ENCODE measurements at regions of chr4 and their contacts with region 1.

Region 1: DNA sequence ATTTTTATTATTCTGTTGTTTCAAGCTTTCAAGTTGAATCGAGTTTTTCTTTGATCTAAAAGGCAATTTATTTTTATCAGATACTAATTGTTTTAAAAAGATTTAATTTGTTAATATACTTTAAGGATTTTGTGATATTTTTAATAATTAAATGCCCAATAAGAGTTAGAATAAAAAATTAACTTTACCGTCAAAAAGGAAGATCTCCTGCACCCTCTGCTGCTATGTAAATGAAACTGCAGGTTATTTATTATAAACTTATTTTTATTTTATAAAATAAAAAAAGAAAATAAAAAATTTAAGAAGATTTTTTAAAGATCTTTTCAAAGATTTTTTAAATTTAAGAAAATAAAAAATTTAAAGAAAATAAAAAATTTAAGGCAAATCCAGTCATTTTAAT is 166.1 kb downstream of the CCSER1 start:
- DNase-seq: no peak
- H3K4me3 ChIP-seq: no peak overlapping the region
- H3K27ac ChIP-seq: no peak overlapping the region
- H3K4me1 ChIP-seq: peaks cover 0 to 4% of the 10 kb centered on the region in 2 experiments; a peak in 2 of 4 replicates
- H3K27me3 ChIP-seq: no peaks in the 10 kb centered on the region
- CTCF ChIP-seq: peak; percentile 54
- EP300 ChIP-seq: no peak
- RAD21 ChIP-seq: peak; percentile 75

Region 2: GRCh38 chr4:89914609-89915550 is 378.4 kb before region 1 on chr4:
- CTCF ChIA-PET with region 1: interaction called, 14 read pairs
- POLR2A ChIA-PET with region 1: no interaction called
- DNase-seq: no peak
- H3K4me3 ChIP-seq: no peak overlapping the region
- H3K27ac ChIP-seq: no peak overlapping the region
- H3K4me1 ChIP-seq: no peaks in the 10 kb centered on the region; a peak in 1 of 4 replicates
- H3K27me3 ChIP-seq: no peaks in the 10 kb centered on the region
- CTCF ChIP-seq: peak; percentile 20; the same call in 1 of the 2 replicates
- EP300 ChIP-seq: no peak
- RAD21 ChIP-seq: peak; percentile 69

Region 3: DNA sequence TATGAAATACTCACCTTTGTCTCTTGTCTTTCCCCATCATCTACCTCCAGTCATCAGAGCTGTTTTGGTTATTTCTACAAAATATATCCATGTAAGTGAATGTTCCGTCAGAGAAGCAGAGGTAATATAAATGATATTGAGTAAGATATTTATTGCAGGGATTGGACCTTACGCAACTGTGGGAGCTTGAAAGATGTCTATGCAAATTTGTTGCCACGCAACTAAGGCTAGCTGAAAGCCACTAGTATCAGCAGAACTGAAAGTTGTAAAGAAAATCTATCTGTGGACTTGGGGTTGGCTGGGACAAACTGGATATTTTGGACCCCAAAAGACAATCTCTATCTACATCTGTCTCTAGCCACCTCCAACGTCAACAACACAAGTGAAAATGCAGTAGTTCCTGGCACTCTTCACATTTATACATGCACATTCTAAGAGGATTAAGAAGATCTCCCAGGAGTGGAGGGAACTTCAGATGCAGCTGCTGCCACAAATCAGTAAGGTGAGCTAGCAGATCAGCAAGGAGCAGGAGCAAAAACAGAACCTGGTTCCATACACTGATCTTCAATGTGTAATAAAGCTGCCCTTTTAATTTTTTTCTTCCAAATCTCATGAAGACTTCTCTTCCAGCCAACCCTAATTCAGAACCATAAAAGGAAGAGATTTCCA is 174.7 kb before region 1 on chr4:
- CTCF ChIA-PET with region 1: interaction called, 10 read pairs
- POLR2A ChIA-PET with region 1: no interaction called
- DNase-seq: no peak
- H3K4me3 ChIP-seq: no peak overlapping the region
- H3K27ac ChIP-seq: no peak overlapping the region
- H3K4me1 ChIP-seq: no peaks in the 10 kb centered on the region; a peak in 1 of 4 replicates
- H3K27me3 ChIP-seq: no peaks in the 10 kb centered on the region
- CTCF ChIP-seq: no peak
- EP300 ChIP-seq: no peak
- RAD21 ChIP-seq: no peak

Region 4: GRCh38 chr4:90306810-90307209 is 13.5 kb after region 1 on chr4:
- CTCF ChIA-PET with region 1: no interaction called
- POLR2A ChIA-PET with region 1: no interaction called
- DNase-seq: no peak
- H3K4me3 ChIP-seq: no peak overlapping the region
- H3K27ac ChIP-seq: no peak overlapping the region
- H3K4me1 ChIP-seq: no peaks in the 10 kb centered on the region
- H3K27me3 ChIP-seq: no peaks in the 10 kb centered on the region
- CTCF ChIP-seq: no peak
- EP300 ChIP-seq: no peak
- RAD21 ChIP-seq: no peak